ENCODE measurements at regions of chr1 and their contacts with region 1.

Region 1: GRCh38 chr1:1291548-1292441 is 11.6 kb downstream of the SCNN1D start:
- DNase-seq: peak in 1 of 2 donors; percentile 54
- ATAC-seq: peak; percentile 48 to 79
- H3K4me3 ChIP-seq: no peak overlapping the region
- H3K27ac ChIP-seq: no peak overlapping the region
- H3K4me1 ChIP-seq: no peaks in the 10 kb centered on the region
- H3K27me3 ChIP-seq: peaks cover 3 to 11% (median 8%) of the 10 kb centered on the region in 3 donors
- CTCF ChIP-seq: peak; percentile 26 to 68 (median 63)
- POLR2A ChIP-seq: no peak

Region 2: DNA sequence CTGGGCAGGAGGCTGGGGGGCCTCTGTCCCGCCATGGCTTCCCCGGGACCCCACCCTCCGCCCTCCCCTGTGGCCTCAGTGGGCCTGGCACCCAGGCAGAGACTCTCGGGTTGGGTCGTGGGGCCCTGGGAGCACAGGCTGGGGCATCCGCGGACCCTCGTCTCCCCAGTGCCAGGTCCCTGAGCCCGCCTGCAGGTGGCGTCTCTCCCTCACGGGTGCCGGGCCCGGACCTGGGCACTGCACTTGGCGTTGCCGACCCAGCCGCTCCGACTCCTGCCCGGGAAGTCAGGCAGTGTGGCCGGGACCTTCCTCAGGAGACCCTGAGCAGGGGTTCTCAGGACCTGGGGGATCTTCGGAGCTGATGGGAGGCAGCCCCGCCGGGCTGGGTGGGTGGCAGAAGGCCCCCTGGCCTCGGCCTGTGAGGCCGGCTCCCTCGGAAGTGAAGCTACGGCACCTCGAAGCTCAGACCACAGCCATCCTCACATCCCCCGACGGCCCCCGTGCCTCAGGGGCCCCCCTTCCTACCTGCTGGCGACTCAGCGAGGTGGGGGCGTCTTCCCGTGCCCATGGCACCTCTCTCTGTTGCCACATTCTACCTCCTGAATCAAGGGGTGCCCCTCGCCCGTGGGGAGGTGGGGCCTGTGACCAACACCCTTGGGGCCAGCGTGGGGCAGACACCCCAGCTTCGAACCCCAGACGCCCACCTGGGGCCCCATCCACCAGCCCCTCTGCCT is 169.6 kb before region 1 on chr1:
- in situ Hi-C with region 1: no loop called
- intact Hi-C with region 1: loop called (anchors 2 kb)
- DNase-seq: peak; percentile 35 to 47
- ATAC-seq: peak; percentile 59 to 64
- H3K4me3 ChIP-seq: peak overlapping the region; percentile 2 to 57 (median 32)
- H3K27ac ChIP-seq: no peak overlapping the region
- H3K4me1 ChIP-seq: no peaks in the 10 kb centered on the region
- H3K27me3 ChIP-seq: peaks cover 4 to 16% (median 6%) of the 10 kb centered on the region in 3 donors
- CTCF ChIP-seq: peak; percentile 67 to 85 (median 83)
- POLR2A ChIP-seq: no peak

Region 3: GRCh38 chr1:1796466-1796865 is 504.7 kb after region 1 on chr1:
- in situ Hi-C with region 1: no loop called
- intact Hi-C with region 1: no loop called
- DNase-seq: no peak
- ATAC-seq: no peak
- H3K4me3 ChIP-seq: no peak overlapping the region
- H3K27ac ChIP-seq: no peak overlapping the region
- H3K4me1 ChIP-seq: peaks cover 9 to 14% of the 10 kb centered on the region in 2 donors
- H3K27me3 ChIP-seq: no peaks in the 10 kb centered on the region
- CTCF ChIP-seq: no peak
- POLR2A ChIP-seq: no peak

Measured in gastrocnemius medialis (tissue), 4 donors.